ENCODE measurements at regions of chr1 and their contacts with region 1.

Region 1: DNA sequence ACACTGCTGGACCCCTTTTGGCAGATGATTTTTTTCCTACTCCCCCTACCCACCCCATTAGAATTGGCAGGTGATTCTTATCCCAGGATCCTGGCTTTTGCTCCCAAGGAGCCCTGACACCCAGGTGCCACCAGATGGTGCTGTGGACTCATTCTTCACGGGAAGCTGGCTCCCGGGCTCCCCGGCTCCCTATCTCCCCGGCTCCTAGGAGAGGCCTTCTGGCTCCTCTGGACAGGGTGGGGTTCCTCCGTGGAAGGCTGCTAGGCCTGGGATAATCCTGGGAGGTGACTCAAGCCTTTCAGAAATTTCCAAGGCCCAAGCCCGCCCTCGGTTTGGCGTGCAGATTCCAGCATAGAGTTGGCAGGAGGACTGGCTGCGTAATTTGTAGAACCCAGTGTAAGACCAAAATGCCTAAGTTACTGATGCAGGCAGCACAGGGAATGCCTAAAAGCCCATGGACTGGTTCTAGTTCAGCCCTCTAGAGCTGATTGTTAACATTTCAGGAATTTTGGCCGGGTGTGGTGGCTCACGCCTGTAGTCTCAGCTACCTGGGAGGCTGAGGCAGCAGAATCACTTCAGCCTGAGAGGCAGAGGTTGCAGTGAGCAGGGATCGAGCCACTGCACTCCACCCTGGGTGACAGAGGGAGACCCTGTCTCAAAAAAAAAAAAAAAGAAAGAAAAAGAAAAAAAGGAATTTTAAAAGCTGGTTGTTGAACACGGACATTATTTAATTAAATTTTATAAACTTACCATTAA is 6.8 kb upstream of the BSDC1 start:
- DNase-seq: peak; percentile 59
- H3K4me3 Mint-ChIP-seq: no peak overlapping the region
- H3K27ac Mint-ChIP-seq: no peak overlapping the region
- H3K4me1 Mint-ChIP-seq: no peaks in the 10 kb centered on the region
- H3K27me3 Mint-ChIP-seq: peaks cover 13% of the 10 kb centered on the region

Region 2: DNA sequence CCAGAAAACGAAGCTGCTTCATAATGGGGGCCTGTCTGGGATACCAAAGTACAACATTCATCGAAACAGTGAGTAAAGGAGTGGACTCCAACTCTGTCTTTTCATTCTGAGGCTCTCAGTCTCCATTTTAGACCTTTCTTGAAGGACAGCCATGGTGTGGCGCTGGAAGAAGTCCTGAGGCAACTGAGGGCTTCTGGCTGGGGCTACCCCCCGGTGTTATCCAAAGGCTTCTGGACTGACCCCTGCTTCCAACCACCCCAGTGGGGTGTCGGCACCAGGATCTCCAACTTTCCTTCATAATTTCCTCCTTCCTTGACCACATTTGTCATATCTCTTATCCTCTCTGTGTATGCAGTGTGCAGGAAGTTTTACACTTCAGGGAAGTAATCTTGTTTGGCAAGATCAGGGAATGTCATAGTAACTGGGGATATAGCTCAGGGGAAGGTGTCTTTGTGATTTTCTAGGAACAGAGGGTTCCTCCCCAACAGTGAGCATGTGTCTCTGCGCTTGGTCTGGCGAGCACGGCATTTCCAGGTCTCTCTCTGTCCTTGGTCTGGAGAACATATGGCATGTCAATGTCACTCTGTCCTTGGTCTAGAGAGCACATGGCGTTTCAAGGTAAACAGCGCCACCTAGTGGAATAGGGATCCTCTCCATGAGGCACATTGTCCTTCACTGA is 12.6 kb after region 1 on chr1:
- CTCF ChIA-PET with region 1: interaction called, 42 read pairs
- POLR2A ChIA-PET with region 1: no interaction called
- DNase-seq: peak; percentile 77
- H3K4me3 Mint-ChIP-seq: no peak overlapping the region
- H3K27ac Mint-ChIP-seq: no peak overlapping the region
- H3K4me1 Mint-ChIP-seq: peaks cover 3% of the 10 kb centered on the region
- H3K27me3 Mint-ChIP-seq: peaks cover 25% of the 10 kb centered on the region

Region 3: DNA sequence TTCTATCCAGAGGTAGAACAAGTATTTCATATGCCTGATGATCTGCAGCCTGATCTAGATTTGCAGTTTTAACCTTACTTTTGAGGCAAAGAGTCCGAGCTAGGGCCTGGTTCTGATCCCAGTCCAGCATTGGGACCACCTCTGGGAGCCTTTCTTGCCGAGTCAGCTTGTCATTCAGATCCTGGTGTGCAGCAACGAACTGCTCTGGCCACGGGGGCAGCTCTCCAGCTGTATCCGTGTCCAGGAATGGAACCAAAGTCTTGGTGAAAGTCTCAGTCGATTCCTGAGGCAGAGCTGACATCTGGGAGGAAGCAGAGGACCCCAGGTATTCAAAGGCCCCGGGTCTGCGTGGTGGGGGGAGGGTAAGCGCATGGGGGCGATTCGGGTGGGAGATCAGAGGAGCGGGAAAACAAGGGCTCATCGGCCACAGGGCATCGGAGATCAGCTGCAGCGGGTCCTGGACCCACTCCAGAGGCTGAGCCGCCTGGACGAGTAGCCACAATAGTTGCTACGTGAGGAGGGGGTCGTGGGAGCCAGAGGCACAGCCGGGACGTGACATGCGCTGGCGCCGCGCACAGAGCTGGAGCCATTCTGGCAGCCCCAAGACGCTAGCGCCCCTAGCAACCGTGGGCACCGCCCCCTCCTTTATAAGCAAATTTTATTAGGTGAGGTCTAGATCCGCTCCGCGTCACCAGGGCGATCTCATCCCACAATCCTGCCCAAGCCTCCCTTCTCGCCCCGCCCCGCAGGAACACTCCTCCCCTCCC is 25.6 kb after region 1 on chr1:
- CTCF ChIA-PET with region 1: interaction called, 18 read pairs
- POLR2A ChIA-PET with region 1: no interaction called
- DNase-seq: no peak
- H3K4me3 Mint-ChIP-seq: no peak overlapping the region
- H3K27ac Mint-ChIP-seq: no peak overlapping the region
- H3K4me1 Mint-ChIP-seq: no peaks in the 10 kb centered on the region
- H3K27me3 Mint-ChIP-seq: peaks cover 55% of the 10 kb centered on the region

Region 4: GRCh38 chr1:32485554-32486255 is 84.7 kb after region 1 on chr1:
- CTCF ChIA-PET with region 1: no interaction called
- POLR2A ChIA-PET with region 1: no interaction called
- DNase-seq: no peak
- H3K4me3 Mint-ChIP-seq: no peak overlapping the region
- H3K27ac Mint-ChIP-seq: no peak overlapping the region
- H3K4me1 Mint-ChIP-seq: no peaks in the 10 kb centered on the region
- H3K27me3 Mint-ChIP-seq: peaks cover 27% of the 10 kb centered on the region